PC-9 (cell line): ENCODE measurements at regions of chr2 and their contacts with region 1.

Region 1: GRCh38 chr2:202479090-202479489 is 103.0 kb downstream of the BMPR2 start:
- DNase-seq: no peak
- H3K4me3 ChIP-seq: no peak overlapping the region
- H3K27ac ChIP-seq: no peak overlapping the region
- H3K4me1 ChIP-seq: no peaks in the 10 kb centered on the region
- H3K27me3 ChIP-seq: no peaks in the 10 kb centered on the region
- CTCF ChIP-seq: no peak

Region 2: DNA sequence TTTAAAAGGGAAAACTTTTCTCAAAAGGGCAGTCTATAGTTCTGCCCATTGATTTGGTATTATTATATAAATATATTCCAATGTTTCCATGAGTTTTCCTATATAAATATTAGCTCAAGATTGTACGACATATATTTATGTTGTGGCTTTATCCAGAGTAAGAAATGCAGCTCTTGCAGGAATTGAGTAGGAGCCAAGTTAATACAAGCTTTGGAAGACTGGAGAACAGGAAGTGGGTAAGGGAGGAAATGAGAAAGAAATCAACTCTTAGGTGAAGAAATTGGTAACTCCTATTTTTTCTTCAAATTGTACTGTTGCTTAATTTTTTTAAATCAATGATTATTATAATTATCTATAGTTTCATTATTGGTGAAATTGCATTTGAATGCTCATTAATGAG is 50.3 kb after region 1 on chr2:
- CTCF ChIA-PET with region 1: no interaction called
- POLR2A ChIA-PET with region 1: interaction called, 16 read pairs
- intact Hi-C with region 1: no loop called
- DNase-seq: no peak
- H3K4me3 ChIP-seq: no peak overlapping the region
- H3K27ac ChIP-seq: no peak overlapping the region
- H3K4me1 ChIP-seq: no peaks in the 10 kb centered on the region
- H3K27me3 ChIP-seq: no peaks in the 10 kb centered on the region
- CTCF ChIP-seq: no peak